AG04450 (cell line): ENCODE measurements at regions of chr10 and their contacts with region 1.

Region 1: GRCh38 chr10:110336111-110336721 is 31.5 kb upstream of the SMNDC1 start:
- DNase-seq: peak; percentile 90
- H3K4me3 ChIP-seq: no peak overlapping the region
- H3K27ac ChIP-seq: peak overlapping the region; percentile 89
- H3K27me3 ChIP-seq: no peaks in the 10 kb centered on the region
- CTCF ChIP-seq: peak; percentile 36

Region 2: GRCh38 chr10:110354322-110354766 is 18.1 kb after region 1 on chr10:
- CTCF ChIA-PET with region 1: interaction called, 23 read pairs
- POLR2A ChIA-PET with region 1: interaction called, 27 read pairs
- DNase-seq: peak; percentile 59
- H3K4me3 ChIP-seq: no peak overlapping the region
- H3K27ac ChIP-seq: peak overlapping the region; percentile 96
- H3K27me3 ChIP-seq: no peaks in the 10 kb centered on the region
- CTCF ChIP-seq: peak; percentile 82